ENCODE measurements at regions of chr10 and their contacts with region 1.

Region 1: DNA sequence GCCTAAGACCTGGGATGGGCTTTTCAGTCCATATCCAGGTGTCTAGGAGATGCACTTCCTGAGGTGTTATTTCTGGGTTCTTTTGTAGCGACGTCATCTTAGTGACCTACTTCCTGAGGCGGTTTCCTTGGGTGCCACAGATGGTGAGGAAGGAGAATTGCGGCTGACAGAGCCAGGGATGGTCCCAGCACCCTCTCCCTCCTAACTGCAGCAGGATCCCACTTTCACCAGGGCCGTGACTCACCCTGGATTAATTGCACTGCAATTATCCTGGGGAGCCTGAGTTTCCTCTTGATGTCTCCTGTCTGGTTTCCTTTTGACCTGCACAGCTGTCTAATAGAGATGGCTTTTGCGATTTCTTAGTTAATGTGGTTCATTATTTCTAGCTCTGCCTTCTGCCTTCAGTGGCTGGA is 271.7 kb downstream of the TCF7L2 start:
- DNase-seq: no peak
- H3K4me3 ChIP-seq: no peak overlapping the region
- H3K27ac ChIP-seq: no peak overlapping the region
- H3K4me1 ChIP-seq: no peaks in the 10 kb centered on the region
- H3K27me3 ChIP-seq: no peaks in the 10 kb centered on the region
- CTCF ChIP-seq: no peak
- EP300 ChIP-seq: no peak
- POLR2A ChIP-seq: no peak

Region 2: DNA sequence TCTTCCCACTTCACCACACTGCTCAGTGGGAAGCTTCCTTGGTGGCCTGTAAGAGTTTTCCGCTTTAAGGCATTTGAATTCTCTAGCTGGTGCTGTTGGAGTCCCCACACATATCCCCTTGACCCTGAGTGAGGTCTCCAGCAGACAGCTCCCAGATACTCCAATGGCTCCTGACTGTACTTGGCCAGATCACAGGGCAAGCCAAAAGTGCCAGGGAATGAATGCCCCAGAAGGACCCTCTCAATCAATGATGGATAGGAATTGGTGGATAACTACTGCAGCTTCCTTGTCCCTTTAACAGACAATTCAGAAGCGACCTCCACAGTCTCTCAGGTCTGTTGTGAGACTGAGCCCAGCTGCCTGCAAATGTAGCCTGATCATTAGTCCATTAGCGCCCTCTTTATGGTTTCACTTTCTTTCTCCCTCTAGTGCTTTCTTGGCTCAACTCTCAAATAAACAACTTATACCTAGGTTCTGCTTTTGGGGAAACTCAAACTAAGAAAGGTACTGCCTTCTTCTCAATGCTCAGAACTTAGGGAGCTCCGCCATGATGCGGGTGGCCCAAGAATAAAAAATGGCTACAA is 11.3 kb after region 1 on chr10:
- intact Hi-C with region 1: loop called in 1 of 4 experiments (anchors 1 kb)
- DNase-seq: no peak
- H3K4me3 ChIP-seq: no peak overlapping the region
- H3K27ac ChIP-seq: no peak overlapping the region
- H3K4me1 ChIP-seq: no peaks in the 10 kb centered on the region
- H3K27me3 ChIP-seq: no peaks in the 10 kb centered on the region
- CTCF ChIP-seq: no peak
- EP300 ChIP-seq: no peak
- POLR2A ChIP-seq: no peak

Measured in ovary (tissue), 10 donors.